Naive thymus-derived CD4-positive, alpha-beta T cell (primary cell): ENCODE measurements at regions of chr7 and their contacts with region 1.

Region 1: DNA sequence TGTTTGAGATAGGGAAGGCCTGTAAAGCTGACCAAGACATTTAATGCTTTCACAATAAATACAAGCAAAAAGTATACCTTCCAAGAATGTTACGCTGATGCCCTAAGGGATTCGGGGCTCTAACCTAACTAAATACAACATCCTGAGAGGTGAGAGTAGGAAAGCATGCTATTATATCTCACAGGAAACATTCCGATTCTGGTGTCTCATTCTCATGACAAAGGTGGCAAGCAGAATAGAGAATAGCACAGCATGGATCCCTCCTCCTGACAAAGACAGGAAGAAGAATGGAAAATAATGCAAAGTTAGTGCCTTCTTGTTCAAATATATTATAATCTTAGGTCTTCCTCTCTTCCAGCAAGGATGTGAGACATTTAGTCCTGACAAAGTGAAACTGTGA is 504.3 kb downstream of the TFEC start:
- DNase-seq: no peak
- ATAC-seq: no peak
- H3K4me3 ChIP-seq: no peak overlapping the region
- H3K4me3 Mint-ChIP-seq: no peak overlapping the region
- H3K27ac ChIP-seq: no peak overlapping the region
- H3K27ac Mint-ChIP-seq: no peak overlapping the region
- H3K4me1 ChIP-seq: no peaks in the 10 kb centered on the region
- H3K4me1 Mint-ChIP-seq: no peaks in the 10 kb centered on the region
- H3K27me3 ChIP-seq: no peaks in the 10 kb centered on the region
- H3K27me3 Mint-ChIP-seq: peaks cover 0 to 22% (median 0%) of the 10 kb centered on the region in 5 donors

Region 2: DNA sequence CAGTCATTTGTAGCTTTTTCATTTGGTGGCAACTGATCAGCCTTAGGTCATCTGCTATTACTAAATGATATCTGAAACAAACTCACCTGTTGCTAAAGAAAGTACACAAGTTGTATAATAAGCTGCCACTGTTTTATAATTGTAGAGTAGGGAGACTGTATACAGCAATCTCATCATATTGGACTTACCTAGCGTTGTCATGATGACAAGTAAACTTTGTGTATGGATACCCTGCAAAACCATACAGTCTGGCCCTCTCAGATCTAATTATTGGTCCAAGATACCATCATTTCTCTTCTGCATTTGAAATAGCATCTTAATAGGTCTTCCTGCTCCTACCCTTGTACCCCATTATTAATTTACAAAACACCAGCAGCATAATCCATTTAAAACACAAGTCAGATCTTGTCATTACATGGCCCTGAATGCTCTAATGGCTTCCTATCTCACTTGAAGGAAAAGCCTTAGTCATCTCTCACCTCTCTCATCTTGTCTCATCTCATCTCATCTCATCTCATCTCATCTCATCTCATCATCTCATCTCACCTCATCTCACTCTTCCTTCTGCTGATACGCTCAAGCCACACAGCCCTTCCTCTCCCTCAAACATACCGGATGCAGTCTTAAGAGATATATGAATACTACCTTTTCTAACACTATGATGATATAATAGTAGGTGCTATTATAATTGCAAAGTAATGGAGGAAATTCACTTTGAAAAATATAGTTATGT is 63.8 kb before region 1 on chr7:
- CTCF ChIA-PET with region 1: no interaction called
- POLR2A ChIA-PET with region 1: no interaction called
- intact Hi-C with region 1: loop called in 1 of 2 experiments (anchors 10 kb)
- DNase-seq: no peak
- ATAC-seq: peak; percentile 48
- H3K4me3 ChIP-seq: no peak overlapping the region
- H3K4me3 Mint-ChIP-seq: no peak overlapping the region
- H3K27ac ChIP-seq: no peak overlapping the region
- H3K27ac Mint-ChIP-seq: no peak overlapping the region
- H3K4me1 ChIP-seq: no peaks in the 10 kb centered on the region
- H3K4me1 Mint-ChIP-seq: no peaks in the 10 kb centered on the region
- H3K27me3 ChIP-seq: no peaks in the 10 kb centered on the region
- H3K27me3 Mint-ChIP-seq: peaks cover 0 to 9% (median 0%) of the 10 kb centered on the region in 5 donors

Region 3: DNA sequence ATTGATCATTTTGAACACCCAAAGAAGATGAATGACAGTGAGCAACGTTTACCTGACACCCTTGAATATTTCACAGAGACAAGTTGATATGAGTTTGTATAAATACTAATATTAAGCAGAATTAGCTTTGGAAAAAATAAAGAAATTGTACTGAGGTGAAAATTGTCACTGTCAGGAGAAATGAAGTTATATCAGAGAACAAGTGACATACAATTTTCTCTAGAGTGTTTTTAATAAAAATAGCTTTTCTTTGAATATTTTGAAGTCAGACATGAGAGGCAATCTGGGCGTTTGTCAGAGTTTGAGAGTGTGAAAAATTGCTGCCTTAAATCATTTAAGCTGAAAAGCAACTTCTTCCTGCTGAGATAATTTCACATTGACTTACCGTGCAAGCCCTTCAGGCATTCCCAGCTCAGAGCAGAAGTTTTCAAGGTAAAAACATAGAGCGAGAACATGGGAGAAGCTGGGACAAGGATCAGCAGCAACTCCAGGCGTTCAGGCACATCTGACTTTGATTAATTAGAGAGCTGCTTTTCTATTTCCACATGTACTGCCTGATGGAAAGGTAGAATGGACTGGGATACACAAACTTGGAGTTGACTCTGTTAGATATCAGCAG is 31.6 kb before region 1 on chr7:
- CTCF ChIA-PET with region 1: no interaction called
- POLR2A ChIA-PET with region 1: no interaction called
- intact Hi-C with region 1: no loop called
- DNase-seq: no peak
- ATAC-seq: no peak
- H3K4me3 ChIP-seq: no peak overlapping the region
- H3K4me3 Mint-ChIP-seq: no peak overlapping the region
- H3K27ac ChIP-seq: no peak overlapping the region
- H3K27ac Mint-ChIP-seq: peak overlapping the region in 1 of 9 donors; percentile 7
- H3K4me1 ChIP-seq: no peaks in the 10 kb centered on the region
- H3K4me1 Mint-ChIP-seq: no peaks in the 10 kb centered on the region
- H3K27me3 ChIP-seq: no peaks in the 10 kb centered on the region
- H3K27me3 Mint-ChIP-seq: peaks cover 0 to 11% (median 4%) of the 10 kb centered on the region in 5 donors